ENCODE measurements at regions of chr1 and their contacts with region 1.

Region 1: DNA sequence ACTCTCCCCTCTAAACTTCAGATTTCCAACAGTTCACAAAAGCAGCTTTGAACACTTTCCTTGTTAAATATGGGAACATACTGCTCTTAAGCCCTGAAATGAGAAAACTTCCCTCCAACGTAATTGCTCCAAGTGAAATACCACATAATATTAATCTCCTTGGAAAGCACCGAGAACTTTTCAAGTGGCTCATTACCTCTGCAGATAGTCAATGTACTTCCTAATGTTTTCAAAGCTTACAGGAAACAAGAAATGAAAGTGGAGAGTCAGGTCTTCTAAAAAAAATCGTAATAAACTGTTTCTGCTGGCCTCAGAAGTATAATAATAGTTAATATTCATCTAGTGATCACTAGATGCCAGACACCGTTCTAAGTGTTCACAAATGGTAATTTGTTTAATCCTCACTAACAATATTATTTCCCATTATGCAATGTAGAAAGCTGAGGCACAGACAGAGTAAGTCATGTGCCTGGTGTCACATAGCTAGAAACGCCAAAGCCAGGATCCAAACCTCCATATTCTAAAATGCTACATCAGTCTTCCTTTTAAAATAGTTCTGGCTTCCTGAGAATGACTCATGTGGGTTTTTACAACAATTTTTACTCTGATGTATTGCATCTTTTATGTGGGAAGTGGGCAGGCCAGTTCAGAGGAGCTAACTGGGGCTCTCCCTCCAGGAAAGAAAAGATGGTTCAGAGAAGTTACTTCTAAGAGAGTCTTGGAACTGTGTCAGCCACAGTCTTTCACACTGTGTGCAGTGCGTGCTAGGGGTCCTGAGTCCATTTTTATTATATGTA is 177.2 kb downstream of the PLPPR4 start:
- DNase-seq: no peak
- ATAC-seq: no peak
- H3K4me3 ChIP-seq: no peak overlapping the region
- H3K27ac ChIP-seq: no peak overlapping the region
- H3K4me1 ChIP-seq: no peaks in the 10 kb centered on the region
- H3K27me3 ChIP-seq: no peaks in the 10 kb centered on the region
- CTCF ChIP-seq: no peak

Region 2: DNA sequence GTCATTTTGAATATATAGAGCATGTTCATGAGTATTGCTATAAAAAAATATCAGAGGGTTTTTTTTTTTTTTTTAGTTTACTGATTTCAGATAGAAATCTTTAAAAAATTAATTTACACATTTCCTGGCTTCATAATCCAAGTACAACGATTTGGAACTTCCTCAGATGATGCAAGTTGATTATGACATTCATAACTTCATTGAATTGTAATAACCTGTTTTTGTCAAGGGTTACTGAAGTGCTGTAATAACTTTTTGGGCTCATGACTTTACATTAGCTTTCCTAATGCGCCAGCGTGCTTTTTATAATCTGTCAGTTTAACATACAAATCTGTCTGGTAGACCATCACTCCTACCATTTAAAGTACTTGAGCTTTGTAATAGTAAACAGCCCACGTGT is 609.9 kb after region 1 on chr1:
- CTCF ChIA-PET with region 1: no interaction called
- POLR2A ChIA-PET with region 1: interaction called, 17 read pairs
- in situ Hi-C with region 1: no loop called
- intact Hi-C with region 1: no loop called
- DNase-seq: no peak
- ATAC-seq: no peak
- H3K4me3 ChIP-seq: no peak overlapping the region
- H3K27ac ChIP-seq: no peak overlapping the region
- H3K4me1 ChIP-seq: no peaks in the 10 kb centered on the region
- H3K27me3 ChIP-seq: no peaks in the 10 kb centered on the region
- CTCF ChIP-seq: no peak